GM12878 (cell line): ENCODE measurements at regions of chr2 and their contacts with region 1.

Region 1: DNA sequence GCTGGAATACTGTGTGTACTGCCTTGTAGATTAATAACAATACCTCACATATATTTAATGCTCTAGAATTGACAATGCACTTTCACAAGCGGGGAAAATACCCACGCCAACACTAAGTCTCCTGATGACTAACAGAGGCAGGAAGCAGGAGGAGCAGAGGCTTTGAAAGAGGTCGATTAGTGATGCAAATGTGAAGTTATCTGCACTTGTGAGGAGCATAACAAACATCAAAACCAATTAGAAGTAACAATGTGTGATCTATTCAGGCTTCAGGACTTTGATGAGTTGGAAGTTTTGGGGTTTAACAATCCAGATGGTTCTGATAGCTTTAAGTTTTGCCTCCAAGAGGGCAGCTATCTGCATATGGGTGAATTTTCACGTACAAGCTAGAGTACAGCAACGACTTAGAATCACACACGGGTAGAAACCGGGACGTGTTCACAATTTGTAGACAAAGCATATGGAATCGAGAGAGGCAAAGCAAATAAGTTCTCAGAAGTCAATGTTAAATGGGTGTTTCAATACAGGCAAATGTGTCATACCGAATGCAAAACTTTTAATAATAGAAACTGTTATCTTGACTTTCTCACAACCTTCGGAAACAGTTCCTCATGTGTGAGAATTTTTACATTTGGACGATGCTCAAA is 114.5 kb downstream of the METTL8 start:
- DNase-seq: peak; percentile 98
- ATAC-seq: peak; percentile 66
- H3K4me3 ChIP-seq: peak overlapping the region; percentile 50; the same call in 1 of the 2 replicates
- H3K27ac ChIP-seq: peak overlapping the region; percentile 100
- H3K4me1 ChIP-seq: peaks cover 78% of the 10 kb centered on the region
- H3K27me3 ChIP-seq: no peaks in the 10 kb centered on the region
- CTCF ChIP-seq: no peak
- EP300 ChIP-seq: peak; percentile 97 to 98
- POLR2A ChIP-seq: peak; percentile 42; the same call in 1 of the 2 replicates
- RAD21 ChIP-seq: peak; percentile 40; the same call in 1 of the 2 replicates

Region 2: DNA sequence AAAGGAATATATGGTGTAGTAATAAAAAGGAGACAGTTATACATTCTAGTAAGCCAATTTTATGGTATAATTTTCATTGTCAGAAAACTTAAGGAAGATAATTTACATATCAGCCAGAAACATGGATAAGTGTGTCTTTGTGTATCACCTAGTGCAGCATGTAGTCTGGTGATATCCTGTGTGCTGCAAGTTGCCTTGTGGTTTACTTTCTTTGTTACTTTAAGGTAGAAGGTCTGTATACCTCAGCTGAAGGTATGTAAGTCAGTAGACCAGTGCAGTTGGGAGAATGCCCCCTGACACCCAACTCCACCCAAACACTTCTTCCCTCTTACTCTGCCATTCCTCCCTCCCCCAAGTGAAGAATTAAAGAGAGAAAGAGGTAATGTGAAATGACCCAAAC is 379.2 kb before region 1 on chr2:
- CTCF ChIA-PET with region 1: no interaction called
- POLR2A ChIA-PET with region 1: no interaction called
- RAD21 ChIA-PET with region 1: no interaction called
- SMC1A ChIA-PET with region 1: no interaction called
- in situ Hi-C with region 1: no loop called
- intact Hi-C with region 1: no loop called
- DNase-seq: no peak
- ATAC-seq: peak; percentile 63
- H3K4me3 ChIP-seq: no peak overlapping the region
- H3K27ac ChIP-seq: no peak overlapping the region
- H3K4me1 ChIP-seq: 0 out of 2 replicates have a peak, but pooled peaks cover 2% of the 10 kb centered on the region
- H3K27me3 ChIP-seq: no peaks in the 10 kb centered on the region
- CTCF ChIP-seq: no peak
- EP300 ChIP-seq: no peak
- POLR2A ChIP-seq: no peak
- RAD21 ChIP-seq: no peak

Region 3: DNA sequence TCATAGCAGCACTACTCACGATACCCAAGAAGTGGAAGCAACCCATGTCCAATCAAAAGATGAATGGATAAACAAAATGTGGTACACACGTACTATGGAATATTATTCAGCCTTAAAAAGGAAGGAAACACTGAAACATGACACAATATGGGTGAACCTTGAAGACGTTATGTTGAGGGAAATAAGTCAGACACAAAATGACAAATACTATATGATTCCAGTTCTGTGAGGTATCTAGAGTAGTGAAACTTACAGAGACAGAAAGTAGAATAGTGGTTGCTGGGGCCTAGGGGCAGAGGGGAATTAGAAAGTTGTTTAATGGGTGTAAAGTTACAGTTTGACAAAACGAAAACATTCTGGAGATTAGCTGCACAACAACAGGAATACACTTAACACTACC is 183.3 kb before region 1 on chr2:
- CTCF ChIA-PET with region 1: interaction called, 6 read pairs
- POLR2A ChIA-PET with region 1: no interaction called
- RAD21 ChIA-PET with region 1: interaction called, 5 read pairs
- SMC1A ChIA-PET with region 1: interaction called, 15 read pairs
- in situ Hi-C with region 1: no loop called
- intact Hi-C with region 1: no loop called
- DNase-seq: peak; percentile 62
- ATAC-seq: peak; percentile 91
- H3K4me3 ChIP-seq: no peak overlapping the region
- H3K27ac ChIP-seq: peak overlapping the region; percentile 69
- H3K4me1 ChIP-seq: peaks cover 28% of the 10 kb centered on the region
- H3K27me3 ChIP-seq: no peaks in the 10 kb centered on the region
- CTCF ChIP-seq: no peak
- EP300 ChIP-seq: no peak
- POLR2A ChIP-seq: no peak
- RAD21 ChIP-seq: no peak

Region 4: GRCh38 chr2:171260471-171261424 is 58.5 kb before region 1 on chr2:
- CTCF ChIA-PET with region 1: interaction called, 3 read pairs
- POLR2A ChIA-PET with region 1: interaction called, 4 read pairs
- RAD21 ChIA-PET with region 1: interaction called, 21 read pairs
- SMC1A ChIA-PET with region 1: interaction called, 9 read pairs
- in situ Hi-C with region 1: no loop called
- intact Hi-C with region 1: no loop called
- DNase-seq: peak; percentile 55
- ATAC-seq: peak; percentile 81
- H3K4me3 ChIP-seq: no peak overlapping the region
- H3K27ac ChIP-seq: peak overlapping the region; percentile 73
- H3K4me1 ChIP-seq: peaks cover 20% of the 10 kb centered on the region
- H3K27me3 ChIP-seq: no peaks in the 10 kb centered on the region
- CTCF ChIP-seq: peak in 2 of 3 experiments; percentile 17 to 20; a peak in 3 of 6 replicates
- EP300 ChIP-seq: no peak
- POLR2A ChIP-seq: no peak
- RAD21 ChIP-seq: peak; percentile 60

Region 5: DNA sequence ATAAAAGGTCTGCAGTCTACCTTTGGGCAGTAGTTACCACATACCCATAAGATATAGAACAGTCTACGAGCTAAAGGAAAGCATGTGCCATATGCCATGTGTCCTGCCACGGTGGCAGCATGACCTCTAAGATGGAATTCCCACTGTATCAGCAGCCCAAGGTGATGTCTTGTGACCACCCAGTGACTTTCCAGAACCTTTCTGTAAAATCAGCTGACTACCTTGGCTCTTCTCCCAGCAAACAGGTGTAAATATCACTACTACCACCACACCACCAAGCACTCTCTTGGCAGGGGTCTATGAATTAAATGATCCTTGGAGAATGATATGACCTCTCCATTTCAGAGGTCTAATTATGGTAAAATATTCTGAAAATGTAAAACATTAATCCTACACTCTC is 14.9 kb after region 1 on chr2:
- CTCF ChIA-PET with region 1: interaction called, 35 read pairs
- POLR2A ChIA-PET with region 1: interaction called, 116 read pairs
- RAD21 ChIA-PET with region 1: interaction called, 215 read pairs
- SMC1A ChIA-PET with region 1: interaction called, 96 read pairs
- in situ Hi-C with region 1: no loop called
- intact Hi-C with region 1: loop called (anchors 2 kb)
- DNase-seq: no peak
- ATAC-seq: no peak
- H3K4me3 ChIP-seq: no peak overlapping the region
- H3K27ac ChIP-seq: peak overlapping the region; percentile 78
- H3K4me1 ChIP-seq: peaks cover 31% of the 10 kb centered on the region
- H3K27me3 ChIP-seq: no peaks in the 10 kb centered on the region
- CTCF ChIP-seq: no peak
- EP300 ChIP-seq: no peak
- POLR2A ChIP-seq: no peak
- RAD21 ChIP-seq: no peak

Region 6: DNA sequence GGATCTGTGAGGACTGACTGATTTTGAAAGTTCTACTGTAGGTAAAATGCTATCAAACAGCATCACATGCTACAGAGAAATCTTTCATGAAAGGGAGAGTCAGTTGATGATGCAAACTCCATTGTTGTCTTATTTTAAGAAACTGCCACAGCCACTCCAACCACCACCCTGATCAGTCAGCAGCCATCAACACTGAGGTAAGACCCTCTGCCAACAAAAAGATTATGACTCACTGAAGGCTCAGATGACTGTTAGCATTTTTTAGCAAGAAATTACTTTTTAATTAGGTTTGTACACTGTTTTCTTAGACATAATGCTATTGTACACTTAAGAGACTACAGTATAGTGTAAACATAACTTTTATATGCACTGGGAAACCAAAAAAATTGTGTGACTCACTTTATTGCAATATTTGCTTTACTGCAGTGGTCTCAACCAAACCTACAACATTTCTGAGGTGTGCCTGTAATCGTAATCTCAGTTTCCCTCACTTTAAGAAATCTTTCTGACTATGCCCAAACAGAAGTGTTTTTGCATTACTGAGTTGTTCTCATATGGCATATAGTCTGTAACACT is 71.7 kb after region 1 on chr2:
- CTCF ChIA-PET with region 1: no interaction called
- POLR2A ChIA-PET with region 1: interaction called, 8 read pairs
- RAD21 ChIA-PET with region 1: interaction called, 17 read pairs
- SMC1A ChIA-PET with region 1: interaction called, 20 read pairs
- in situ Hi-C with region 1: no loop called
- intact Hi-C with region 1: no loop called
- DNase-seq: no peak
- ATAC-seq: peak; percentile 83
- H3K4me3 ChIP-seq: no peak overlapping the region
- H3K27ac ChIP-seq: peak overlapping the region; percentile 64
- H3K4me1 ChIP-seq: peaks cover 48% of the 10 kb centered on the region
- H3K27me3 ChIP-seq: no peaks in the 10 kb centered on the region
- CTCF ChIP-seq: no peak
- EP300 ChIP-seq: peak; percentile 58 to 64; a peak in 2 of 4 replicates
- POLR2A ChIP-seq: no peak
- RAD21 ChIP-seq: no peak

Region 7: GRCh38 chr2:171433763-171434670 is 114.7 kb after region 1 on chr2 and contains the starts of genes DCAF17 and METTL8:
- CTCF ChIA-PET with region 1: interaction called, 4 read pairs
- POLR2A ChIA-PET with region 1: interaction called, 3 read pairs
- RAD21 ChIA-PET with region 1: interaction called, 6 read pairs
- SMC1A ChIA-PET with region 1: interaction called, 13 read pairs
- in situ Hi-C with region 1: no loop called
- intact Hi-C with region 1: loop called (anchors 1 kb)
- DNase-seq: peak; percentile 94
- ATAC-seq: peak; percentile 94
- H3K4me3 ChIP-seq: peak within 1 kb of the TSS; percentile 81
- H3K27ac ChIP-seq: peak within 1 kb of the TSS; percentile 93
- H3K4me1 ChIP-seq: peaks cover 13% of the 10 kb centered on the region
- H3K27me3 ChIP-seq: no peaks in the 10 kb centered on the region
- CTCF ChIP-seq: peak; percentile 52 to 72 (median 61)
- EP300 ChIP-seq: no peak
- POLR2A ChIP-seq: peak; percentile 92
- RAD21 ChIP-seq: peak; percentile 33
- polyA plus RNA-seq, gene DCAF17: 5.2 to 5.6 TPM
- polyA plus RNA-seq, gene METTL8: 34.9 to 42.5 TPM